ENCODE measurements at regions of chr3 and their contacts with region 1.

Region 1: GRCh38 chr3:194738254-194739093 is 52.8 kb downstream of the FAM43A start:
- DNase-seq: peak; percentile 74 to 92 (median 88)
- H3K4me3 ChIP-seq: no peak overlapping the region
- H3K27ac ChIP-seq: peak overlapping the region in 13 of 59 donors; percentile 8 to 53 (median 30)
- H3K27me3 ChIP-seq: peaks cover 0 to 4% (median 0%) of the 10 kb centered on the region in 45 donors
- CTCF ChIP-seq: peak in 2 of 56 donors; percentile 22

Region 2: DNA sequence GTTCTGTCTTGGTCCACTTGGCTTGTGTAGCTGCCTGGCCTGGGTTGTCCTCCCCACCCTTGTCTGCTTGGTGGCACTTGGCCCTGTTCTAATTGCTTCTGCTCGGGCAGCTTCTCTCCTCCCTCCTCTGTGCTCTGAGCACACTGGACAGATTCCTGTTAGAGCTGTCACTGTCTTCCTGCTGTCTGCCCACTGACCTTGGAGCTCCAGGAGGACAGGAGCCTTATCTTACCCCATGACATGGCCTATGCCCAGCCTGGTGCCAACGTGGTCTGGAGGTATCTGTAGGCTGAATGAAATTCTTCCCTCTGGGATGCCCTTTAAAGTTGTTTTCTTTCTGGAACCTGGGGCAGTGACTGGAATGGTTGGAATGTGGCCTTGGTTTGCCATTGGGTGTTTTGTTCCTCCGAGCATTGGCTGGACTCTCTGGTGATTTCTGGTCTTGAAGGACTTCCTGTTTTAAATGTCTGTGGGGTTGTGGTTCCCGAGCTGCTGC is 41.3 kb after region 1 on chr3:
- intact Hi-C with region 1: loop called in 1 of 2 experiments (anchors 5 kb)
- DNase-seq: peak in 1 of 10 donors; percentile 20
- H3K4me3 ChIP-seq: no peak overlapping the region
- H3K27ac ChIP-seq: no peak overlapping the region
- H3K27me3 ChIP-seq: peaks cover 0 to 12% (median 0%) of the 10 kb centered on the region in 45 donors
- CTCF ChIP-seq: no peak

Region 3: GRCh38 chr3:194824701-194825111 is 86.2 kb after region 1 on chr3:
- intact Hi-C with region 1: no loop called
- DNase-seq: peak in 2 of 10 donors; percentile 11 to 50
- H3K4me3 ChIP-seq: no peak overlapping the region
- H3K27ac ChIP-seq: no peak overlapping the region
- H3K27me3 ChIP-seq: peaks cover 0 to 3% (median 0%) of the 10 kb centered on the region in 45 donors
- CTCF ChIP-seq: no peak